Activated T-helper 1 cell treated with anti-CD3 and anti-CD28 coated beads, Interleukin-12 subunit alpha, Interleukin-12 subunit beta, Interleukin-2, Interleukin-4 antibody, amounts not matched to agents 30 ng/mL and 10 ng/mL and 1 ng/mL, durations not matched to agents 14 hours and 24 hours and 36 hours (primary cell): ENCODE measurements at regions of chr7 and their contacts with region 1.

Region 1: GRCh38 chr7:123712619-123713018 is 36.2 kb downstream of the WASL start:
- DNase-seq: no peak
- H3K4me3 Mint-ChIP-seq: no peak overlapping the region
- H3K27ac Mint-ChIP-seq: peak overlapping the region; percentile 9
- H3K4me1 Mint-ChIP-seq: peaks cover 59% of the 10 kb centered on the region
- H3K27me3 Mint-ChIP-seq: no peaks in the 10 kb centered on the region

Region 2: DNA sequence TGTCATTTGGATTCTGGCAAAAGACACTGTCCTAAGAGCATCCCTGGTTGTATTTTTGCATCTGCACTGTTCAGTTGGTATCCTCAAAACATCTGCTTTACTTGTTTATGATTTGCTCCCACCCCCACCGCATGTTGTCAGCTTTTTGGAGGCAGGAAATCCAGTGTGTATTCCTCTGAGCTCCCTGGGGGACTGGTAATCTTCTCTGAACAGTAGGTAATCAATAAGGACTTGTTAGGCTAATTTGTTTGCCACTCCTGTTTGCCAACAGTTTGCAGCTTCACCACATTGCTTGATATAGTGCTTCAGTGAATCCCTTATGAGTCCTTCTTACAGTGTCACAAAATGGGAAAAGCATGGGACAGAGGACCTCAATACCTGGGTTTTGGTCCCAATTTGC is 1457.2 kb before region 1 on chr7:
- intact Hi-C with region 1: no loop called
- DNase-seq: no peak
- H3K4me3 Mint-ChIP-seq: no peak overlapping the region
- H3K27ac Mint-ChIP-seq: no peak overlapping the region
- H3K4me1 Mint-ChIP-seq: no peaks in the 10 kb centered on the region
- H3K27me3 Mint-ChIP-seq: no peaks in the 10 kb centered on the region

Region 3: GRCh38 chr7:123770378-123770777 is 57.8 kb after region 1 on chr7:
- intact Hi-C with region 1: loop called (anchors 2 kb)
- DNase-seq: no peak
- H3K4me3 Mint-ChIP-seq: no peak overlapping the region
- H3K27ac Mint-ChIP-seq: no peak overlapping the region
- H3K4me1 Mint-ChIP-seq: peaks cover 8% of the 10 kb centered on the region
- H3K27me3 Mint-ChIP-seq: peaks cover 4% of the 10 kb centered on the region

Region 4: GRCh38 chr7:123823898-123824753 is 111.5 kb after region 1 on chr7:
- intact Hi-C with region 1: loop called (anchors 1 kb)
- DNase-seq: peak; percentile 44
- H3K4me3 Mint-ChIP-seq: peak overlapping the region; percentile 38
- H3K27ac Mint-ChIP-seq: peak overlapping the region; percentile 77
- H3K4me1 Mint-ChIP-seq: peaks cover 25% of the 10 kb centered on the region
- H3K27me3 Mint-ChIP-seq: peaks cover 7% of the 10 kb centered on the region

Region 5: DNA sequence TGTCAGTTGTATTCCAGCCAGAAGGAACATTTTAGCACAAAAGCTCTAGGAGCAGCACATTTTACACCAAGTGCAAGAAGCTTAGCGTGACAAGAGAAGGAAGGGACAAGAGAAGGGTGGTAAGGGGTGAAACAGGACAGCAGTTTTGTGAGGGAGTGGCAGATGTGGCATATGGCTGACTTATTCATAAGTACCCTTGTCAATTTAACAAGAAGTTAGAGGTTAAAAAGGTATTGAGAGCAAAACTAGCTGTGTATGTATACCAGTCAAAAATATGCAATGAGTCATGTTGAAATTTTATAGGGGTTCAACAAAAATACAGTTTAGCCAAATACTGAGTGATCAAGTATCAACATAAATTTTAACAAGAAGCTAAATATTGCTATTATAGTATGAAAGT is 1778.5 kb after region 1 on chr7:
- intact Hi-C with region 1: no loop called
- DNase-seq: no peak
- H3K4me3 Mint-ChIP-seq: no peak overlapping the region
- H3K27ac Mint-ChIP-seq: no peak overlapping the region
- H3K4me1 Mint-ChIP-seq: no peaks in the 10 kb centered on the region
- H3K27me3 Mint-ChIP-seq: no peaks in the 10 kb centered on the region